Body of pancreas (tissue), 4 donors: ENCODE measurements at regions of chr1 and their contacts with region 1.

Region 1: GRCh38 chr1:201137579-201138310 is 10.8 kb upstream of the ASCL5 start:
- DNase-seq: peak; percentile 80 to 91 (median 85)
- ATAC-seq: peak; percentile 82
- H3K4me3 ChIP-seq: no peak overlapping the region
- H3K27ac ChIP-seq: peak overlapping the region in 3 of 4 donors; percentile 25 to 69 (median 66)
- H3K4me1 ChIP-seq: peaks cover 35% of the 10 kb centered on the region
- H3K27me3 ChIP-seq: no peaks in the 10 kb centered on the region
- CTCF ChIP-seq: no peak
- POLR2A ChIP-seq: no peak

Region 2: DNA sequence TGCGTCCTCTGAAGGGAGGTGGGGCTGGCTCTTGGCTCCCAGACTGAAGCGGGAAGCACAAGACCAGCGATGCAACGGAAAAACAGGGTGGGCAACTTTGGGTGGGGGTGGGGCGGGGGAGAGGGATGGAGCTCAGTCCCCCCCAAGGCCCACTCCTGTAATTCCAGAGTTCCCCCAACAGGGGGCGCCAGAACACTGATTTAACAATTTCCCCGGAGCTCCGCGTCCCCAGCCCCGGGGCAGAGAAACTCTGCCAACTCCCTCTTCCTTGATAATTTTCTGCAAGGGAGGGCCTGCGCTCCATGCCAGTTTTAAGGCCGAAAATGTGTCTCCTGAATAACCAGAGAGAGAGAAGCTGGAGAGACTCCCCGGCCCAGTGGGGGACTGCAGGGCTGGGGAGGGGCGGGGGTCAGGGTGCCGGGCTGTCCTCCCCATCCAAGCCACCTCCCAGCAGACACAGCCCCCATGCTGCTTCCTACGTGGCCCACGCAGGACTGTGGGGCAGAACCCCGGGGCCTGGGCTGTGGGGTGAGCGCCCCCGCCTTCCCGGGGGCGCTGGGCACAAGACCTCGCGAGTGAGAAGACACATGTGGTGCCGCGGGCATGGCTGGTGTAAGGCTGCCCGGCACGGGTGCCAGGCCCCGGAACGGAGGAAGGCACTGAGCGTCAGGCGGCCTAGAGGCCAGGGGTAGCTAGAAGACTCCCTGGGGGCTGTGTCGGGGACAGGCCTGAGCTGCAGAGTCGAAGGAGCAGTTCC is 165.6 kb before region 1 on chr1:
- intact Hi-C with region 1: no loop called
- DNase-seq: peak; percentile 67 to 76 (median 71)
- ATAC-seq: peak; percentile 44
- H3K4me3 ChIP-seq: no peak overlapping the region
- H3K27ac ChIP-seq: no peak overlapping the region
- H3K4me1 ChIP-seq: peaks cover 4% of the 10 kb centered on the region
- H3K27me3 ChIP-seq: no peaks in the 10 kb centered on the region
- CTCF ChIP-seq: peak; percentile 61 to 93 (median 78)
- POLR2A ChIP-seq: no peak

Region 3: DNA sequence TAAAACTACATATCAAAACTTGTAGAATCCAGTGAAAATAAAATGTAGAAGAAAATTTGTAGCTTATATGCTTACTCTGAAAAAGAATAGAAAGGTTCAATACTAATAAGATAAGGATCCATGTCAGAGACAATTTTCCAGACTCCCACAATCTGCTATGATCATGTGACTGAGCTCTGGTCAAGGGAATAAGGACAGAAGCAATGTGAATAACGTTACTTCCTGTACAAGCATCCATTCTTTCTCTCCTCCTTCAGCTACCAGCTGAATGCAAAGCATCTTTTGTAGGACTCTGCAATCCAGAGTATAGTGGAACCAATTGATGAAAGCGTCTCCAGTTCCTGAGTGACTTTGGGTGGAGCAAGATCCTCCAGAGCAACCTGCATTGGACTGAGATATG is 106.3 kb after region 1 on chr1:
- intact Hi-C with region 1: loop called (anchors 5 kb)
- DNase-seq: no peak
- ATAC-seq: no peak
- H3K4me3 ChIP-seq: no peak overlapping the region
- H3K27ac ChIP-seq: no peak overlapping the region
- H3K4me1 ChIP-seq: peaks cover 3% of the 10 kb centered on the region
- H3K27me3 ChIP-seq: no peaks in the 10 kb centered on the region
- CTCF ChIP-seq: no peak
- POLR2A ChIP-seq: no peak

Region 4: DNA sequence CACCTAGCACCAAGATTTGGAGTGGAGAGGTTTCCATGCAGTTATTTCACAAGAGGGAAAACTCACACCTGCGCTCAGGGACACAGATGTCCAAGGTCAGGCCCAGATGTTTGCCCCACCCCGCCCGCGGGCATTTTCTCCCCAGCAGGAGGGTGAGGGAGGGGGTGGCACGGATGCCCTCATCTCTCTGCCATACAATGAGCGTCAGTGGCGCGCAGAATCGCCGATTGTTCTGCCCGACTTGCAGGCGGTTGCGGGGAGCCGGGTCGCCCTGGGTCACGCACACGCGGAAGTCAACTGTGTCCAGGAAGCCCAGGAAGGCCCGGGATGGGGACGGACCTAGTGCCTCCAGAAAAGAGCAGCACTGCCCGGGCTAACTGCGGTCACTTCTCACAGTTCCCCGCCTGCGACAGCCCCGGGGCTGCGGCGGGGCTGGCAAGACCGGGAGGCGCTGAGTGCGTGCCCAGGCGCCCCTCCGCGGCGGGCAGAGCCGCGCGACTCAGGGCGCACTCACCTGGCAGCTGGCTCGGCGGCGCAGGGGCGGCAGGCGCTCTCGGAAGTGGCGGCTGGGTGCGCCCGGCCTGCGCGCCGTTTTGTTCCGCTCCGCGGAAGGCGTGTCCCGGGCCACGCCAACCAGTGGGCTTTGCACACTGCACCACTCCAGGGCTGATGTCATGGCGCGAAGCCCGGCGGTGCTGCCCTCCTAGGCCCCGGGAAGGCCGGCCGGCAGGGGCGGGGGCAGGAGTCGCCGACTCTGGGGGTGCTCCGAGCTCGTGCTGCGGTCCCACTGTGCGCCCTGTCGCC is 369.0 kb after region 1 on chr1 and contains the start of gene CSRP1:
- intact Hi-C with region 1: no loop called
- DNase-seq: peak; percentile 89 to 94 (median 92)
- ATAC-seq: peak; percentile 90
- H3K4me3 ChIP-seq: peak within 1 kb of the TSS; percentile 18 to 40
- H3K27ac ChIP-seq: peak within 1 kb of the TSS; percentile 90 to 99 (median 96)
- H3K4me1 ChIP-seq: peaks cover 65% of the 10 kb centered on the region
- H3K27me3 ChIP-seq: no peaks in the 10 kb centered on the region
- CTCF ChIP-seq: peak in 2 of 7 experiments; percentile 14 to 18
- POLR2A ChIP-seq: peak; percentile 88 to 99 (median 91)
- total RNA-seq, gene CSRP1: 127 to 245 TPM